ENCODE measurements at regions of chr16 and their contacts with region 1.

Region 1: DNA sequence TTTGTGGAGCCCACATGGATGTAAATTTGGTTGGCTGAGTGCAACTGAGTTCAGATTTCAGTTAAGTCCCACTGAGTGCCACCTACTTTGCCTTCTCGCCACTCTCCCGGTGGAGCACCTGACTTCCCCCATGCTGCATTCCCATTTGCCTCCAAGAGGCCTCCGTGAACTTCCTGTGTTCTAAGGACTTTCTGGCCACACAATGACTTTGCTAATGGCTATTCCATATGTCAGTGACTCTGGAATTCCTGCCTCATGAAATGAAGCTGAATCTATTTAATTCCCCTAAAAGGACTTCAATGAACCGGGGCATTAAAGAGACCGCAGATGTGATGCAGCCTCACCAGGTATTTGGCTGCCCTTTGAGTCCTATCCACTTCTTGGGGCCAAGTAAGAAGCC is 29.9 kb downstream of the ABCC12 start:
- DNase-seq: peak in 2 of 5 donors; percentile 30 to 41
- ATAC-seq: peak in 3 of 4 donors; percentile 33 to 83 (median 57)
- H3K4me3 ChIP-seq: no peak overlapping the region
- H3K27ac ChIP-seq: peak overlapping the region in 9 of 12 donors; percentile 8 to 71 (median 52)
- H3K4me1 ChIP-seq: peaks cover 0 to 39% (median 19%) of the 10 kb centered on the region in 12 donors
- H3K27me3 ChIP-seq: no peaks in the 10 kb centered on the region
- CTCF ChIP-seq: no peak
- POLR2A ChIP-seq: no peak

Region 2: DNA sequence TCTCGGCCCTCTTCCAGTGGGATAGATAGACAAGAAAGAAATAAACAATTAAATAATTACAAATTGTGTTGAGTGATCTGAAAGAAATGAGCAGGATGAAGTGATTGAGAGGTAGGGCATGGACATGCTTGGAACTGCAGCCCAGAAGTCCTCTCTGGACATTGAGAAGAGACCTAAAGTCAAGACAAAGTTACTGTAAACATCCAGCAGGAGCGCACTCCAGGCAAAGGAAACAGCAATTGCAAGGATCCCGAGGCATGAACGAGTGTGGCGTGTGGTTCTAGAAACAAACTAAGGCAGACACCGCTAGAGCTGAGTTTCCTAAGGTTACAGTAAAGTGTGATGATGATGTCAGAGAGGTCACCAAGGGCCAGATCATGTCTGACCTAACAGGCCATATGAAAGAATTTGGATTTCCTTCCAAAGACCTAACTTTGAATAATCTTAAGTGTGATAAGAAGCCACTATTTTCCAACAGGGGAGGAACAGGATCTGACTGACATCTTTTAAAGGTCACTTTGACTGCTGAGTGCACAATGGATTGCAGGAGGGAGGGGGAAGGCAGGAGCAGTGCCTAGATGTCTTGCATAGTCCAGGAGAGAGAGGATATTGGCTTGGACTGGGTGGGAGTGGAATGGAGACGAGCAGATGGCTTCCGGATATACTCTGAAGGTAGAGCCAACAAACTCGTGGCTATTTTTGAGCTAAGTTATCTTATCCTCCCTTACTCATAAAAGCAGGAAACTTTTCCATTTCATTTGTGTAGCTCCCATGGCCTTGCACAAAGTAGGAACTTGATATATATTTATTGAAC is 10.9 kb after region 1 on chr16:
- intact Hi-C with region 1: loop called in 1 of 10 experiments (anchors 1 kb)
- DNase-seq: peak in 3 of 5 donors; percentile 36 to 49 (median 38)
- ATAC-seq: peak; percentile 83 to 97 (median 92)
- H3K4me3 ChIP-seq: no peak overlapping the region
- H3K27ac ChIP-seq: peak overlapping the region in 4 of 12 donors; percentile 11 to 45 (median 38)
- H3K4me1 ChIP-seq: peaks cover 3 to 26% (median 14%) of the 10 kb centered on the region in 12 donors
- H3K27me3 ChIP-seq: no peaks in the 10 kb centered on the region
- CTCF ChIP-seq: peak in 3 of 12 donors; percentile 9 to 16 (median 14)
- POLR2A ChIP-seq: no peak

Region 3: GRCh38 chr16:48576927-48577326 is 451.0 kb after region 1 on chr16:
- intact Hi-C with region 1: no loop called
- DNase-seq: no peak
- ATAC-seq: peak in 3 of 4 donors; percentile 15 to 70 (median 20)
- H3K4me3 ChIP-seq: no peak overlapping the region
- H3K27ac ChIP-seq: peak overlapping the region in 1 of 12 donors; percentile 7
- H3K4me1 ChIP-seq: peaks cover 0 to 64% (median 32%) of the 10 kb centered on the region in 12 donors
- H3K27me3 ChIP-seq: no peaks in the 10 kb centered on the region
- CTCF ChIP-seq: no peak
- POLR2A ChIP-seq: no peak

Measured in heart left ventricle (tissue), 16 donors.